ENCODE measurements at regions of chr1 and their contacts with region 1.

Region 1: GRCh38 chr1:43529206-43529731 is 1.4 kb upstream of the PTPRF start:
- DNase-seq: peak; percentile 82
- ATAC-seq: peak; percentile 64
- H3K4me3 ChIP-seq: no peak overlapping the region
- H3K27ac ChIP-seq: no peak overlapping the region
- H3K4me1 ChIP-seq: peaks cover 45% of the 10 kb centered on the region
- H3K27me3 ChIP-seq: no peaks in the 10 kb centered on the region
- CTCF ChIP-seq: peak; percentile 95
- EP300 ChIP-seq: no peak
- POLR2A ChIP-seq: no peak
- RAD21 ChIP-seq: peak; percentile 95

Region 2: GRCh38 chr1:43554444-43554992 is 25.2 kb after region 1 on chr1:
- CTCF ChIA-PET with region 1: interaction called, 11 read pairs
- POLR2A ChIA-PET with region 1: interaction called, 87 read pairs
- in situ Hi-C with region 1: no loop called
- intact Hi-C with region 1: no loop called
- DNase-seq: peak; percentile 41
- ATAC-seq: peak; percentile 68
- H3K4me3 ChIP-seq: no peak overlapping the region
- H3K27ac ChIP-seq: no peak overlapping the region
- H3K4me1 ChIP-seq: peaks cover 23% of the 10 kb centered on the region
- H3K27me3 ChIP-seq: no peaks in the 10 kb centered on the region
- CTCF ChIP-seq: peak; percentile 51
- EP300 ChIP-seq: no peak
- POLR2A ChIP-seq: no peak
- RAD21 ChIP-seq: no peak

Region 3: DNA sequence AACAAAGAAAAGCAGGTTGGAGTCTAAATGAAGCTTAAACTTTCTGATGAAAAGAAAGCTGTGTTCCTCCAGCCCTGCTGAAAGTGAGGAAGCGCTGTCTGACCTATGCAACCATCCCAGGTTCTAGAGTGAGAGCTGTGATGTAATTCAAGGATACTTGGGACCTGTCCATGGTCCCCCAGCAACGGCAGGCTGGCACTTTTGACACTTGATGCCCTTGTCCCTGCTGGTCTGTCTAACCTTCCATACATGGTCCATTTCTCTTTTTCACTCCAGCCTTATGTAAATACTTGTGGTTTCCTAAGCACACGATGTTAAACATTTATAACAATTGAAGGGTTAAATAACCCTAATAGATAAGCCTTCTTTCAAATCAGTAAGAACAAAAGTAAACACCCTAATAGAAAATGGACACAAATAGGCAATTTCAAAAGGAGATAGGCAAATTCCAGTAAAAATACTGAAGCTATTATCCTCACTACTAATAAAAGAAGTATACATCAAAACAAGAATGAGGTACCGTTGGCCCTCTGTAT is 102.9 kb after region 1 on chr1:
- CTCF ChIA-PET with region 1: no interaction called
- POLR2A ChIA-PET with region 1: no interaction called
- in situ Hi-C with region 1: no loop called
- intact Hi-C with region 1: no loop called
- DNase-seq: peak; percentile 44
- ATAC-seq: peak; percentile 61
- H3K4me3 ChIP-seq: no peak overlapping the region
- H3K27ac ChIP-seq: no peak overlapping the region
- H3K4me1 ChIP-seq: 0 out of 2 replicates have a peak, but pooled peaks cover 6% of the 10 kb centered on the region
- H3K27me3 ChIP-seq: peaks cover 2 to 11% of the 10 kb centered on the region in 2 experiments; a peak in 2 of 5 replicates
- CTCF ChIP-seq: no peak
- EP300 ChIP-seq: no peak
- POLR2A ChIP-seq: no peak
- RAD21 ChIP-seq: no peak

Region 4: DNA sequence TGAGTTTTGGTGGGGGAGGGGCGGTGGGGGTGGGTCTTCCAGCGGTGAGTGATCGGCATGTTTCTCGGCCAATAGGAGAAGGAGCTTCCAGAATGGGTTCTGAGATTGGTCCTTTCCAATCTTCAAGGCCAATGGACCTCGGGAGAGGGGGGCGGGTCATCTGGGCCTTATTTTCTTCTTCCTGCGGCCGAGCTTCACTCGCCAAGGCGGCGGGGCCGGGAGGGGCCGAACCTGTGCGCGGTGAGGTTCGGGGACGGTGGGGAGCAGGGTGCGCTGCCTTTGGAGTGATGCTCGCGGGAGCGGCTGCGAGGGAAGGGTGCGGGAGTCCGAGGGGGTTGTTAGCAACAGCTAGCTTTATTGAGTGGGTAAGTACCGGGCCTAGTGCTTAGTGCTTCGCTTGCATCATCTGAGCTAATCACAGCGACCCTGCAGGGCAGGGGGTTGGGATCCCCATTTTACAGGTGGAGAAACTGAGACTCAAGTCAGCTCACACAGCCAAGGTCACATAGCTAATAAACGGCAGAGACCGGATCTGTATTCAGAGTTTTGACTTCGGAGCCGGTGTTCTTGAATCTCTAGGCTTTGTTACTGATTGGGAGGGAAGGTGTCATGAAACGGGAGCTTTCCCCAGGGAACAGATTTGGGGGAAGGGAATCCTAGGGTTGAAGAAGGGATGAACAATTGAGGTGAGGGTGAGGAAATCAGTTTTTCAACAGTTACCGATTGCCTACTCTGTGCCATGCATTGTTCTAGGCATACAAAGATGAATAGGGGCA is 121.2 kb after region 1 on chr1:
- CTCF ChIA-PET with region 1: no interaction called
- POLR2A ChIA-PET with region 1: interaction called, 22 read pairs
- in situ Hi-C with region 1: no loop called
- intact Hi-C with region 1: loop called (anchors 5 kb)
- DNase-seq: peak; percentile 96
- ATAC-seq: peak; percentile 79
- H3K4me3 ChIP-seq: peak overlapping the region; percentile 83 to 92 (median 88)
- H3K27ac ChIP-seq: peak overlapping the region; percentile 89
- H3K4me1 ChIP-seq: peaks cover 27% of the 10 kb centered on the region
- H3K27me3 ChIP-seq: no peaks in the 10 kb centered on the region; a peak in 1 of 5 replicates
- CTCF ChIP-seq: no peak; the same call in 1 of the 2 replicates
- EP300 ChIP-seq: 0 out of 4 replicates have a peak, but pooled peaks of 1 of the 2 experiments have one; percentile 4
- POLR2A ChIP-seq: peak; percentile 95 to 99
- RAD21 ChIP-seq: peak; percentile 52

Region 5: DNA sequence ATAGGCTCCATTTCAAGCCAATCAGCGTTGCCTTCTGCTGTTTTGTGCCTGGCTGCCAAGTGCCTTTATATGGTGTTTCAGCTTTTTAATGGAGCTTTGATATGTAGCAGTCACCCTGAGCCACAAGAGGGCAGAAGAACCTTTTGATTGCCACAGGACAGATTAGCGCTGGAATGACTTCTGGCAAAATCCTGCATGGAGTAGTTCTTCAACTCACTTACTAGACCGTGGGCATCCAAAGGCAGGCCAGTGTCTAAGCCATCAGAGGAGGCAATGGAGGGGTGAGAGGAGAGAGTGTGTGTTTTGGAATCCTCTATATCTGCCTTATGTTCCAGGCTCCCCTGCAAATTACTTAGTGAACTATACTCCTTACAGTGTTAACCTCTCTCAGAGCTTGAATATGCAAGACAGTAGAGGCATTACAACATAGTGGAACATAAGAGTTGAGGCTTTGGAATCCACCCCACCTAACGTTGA is 234.3 kb after region 1 on chr1:
- CTCF ChIA-PET with region 1: no interaction called
- POLR2A ChIA-PET with region 1: no interaction called
- in situ Hi-C with region 1: no loop called
- intact Hi-C with region 1: loop called (anchors 2 kb)
- DNase-seq: peak; percentile 71
- ATAC-seq: peak; percentile 95
- H3K4me3 ChIP-seq: no peak overlapping the region
- H3K27ac ChIP-seq: no peak overlapping the region
- H3K4me1 ChIP-seq: peaks cover 17% of the 10 kb centered on the region
- H3K27me3 ChIP-seq: no peaks in the 10 kb centered on the region
- CTCF ChIP-seq: peak; percentile 89
- EP300 ChIP-seq: no peak
- POLR2A ChIP-seq: no peak
- RAD21 ChIP-seq: peak; percentile 85

Measured in HepG2 (cell line).